ENCODE measurements at regions of chr22 and their contacts with region 1.

Region 1: DNA sequence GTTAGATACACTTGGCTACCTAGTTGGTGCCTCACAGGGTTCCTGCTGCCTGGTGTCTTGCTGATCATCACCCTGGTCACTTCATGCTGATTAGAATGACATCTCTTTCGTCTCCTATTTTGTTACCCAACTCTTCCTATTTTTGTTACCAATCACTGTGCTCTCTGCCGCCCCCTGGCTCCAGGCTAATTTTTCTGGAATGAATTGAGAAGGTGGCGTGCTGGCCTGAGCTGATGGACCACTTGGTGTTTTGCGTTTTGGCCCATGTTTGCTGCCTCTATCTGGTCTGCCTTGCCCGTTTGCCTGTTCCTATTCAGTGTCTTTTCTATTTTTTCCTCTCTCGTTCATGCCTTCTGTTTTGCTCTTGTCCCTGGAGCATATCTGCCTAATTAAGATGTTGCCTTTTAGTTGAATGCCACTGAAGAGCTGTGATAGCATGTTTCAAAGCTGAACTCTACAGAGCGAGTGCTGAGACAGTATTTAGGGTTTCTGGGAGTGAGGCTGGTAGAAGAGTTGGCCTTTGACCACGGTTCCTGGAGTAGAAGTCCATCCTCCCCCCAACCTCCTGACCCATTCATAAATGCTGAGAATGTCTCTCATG is 5.9 kb upstream of the ATF4 start:
- DNase-seq: peak in 11 of 14 experiments; percentile 42 to 68 (median 51)
- ATAC-seq: peak; percentile 58
- H3K4me3 ChIP-seq: no peak overlapping the region
- H3K4me3 Mint-ChIP-seq: no peak overlapping the region
- H3K27ac ChIP-seq: no peak overlapping the region
- H3K27ac Mint-ChIP-seq: peak overlapping the region; percentile 4
- H3K4me1 ChIP-seq: peaks cover 8% of the 10 kb centered on the region
- H3K4me1 Mint-ChIP-seq: peaks cover 16% of the 10 kb centered on the region
- H3K27me3 ChIP-seq: no peaks in the 10 kb centered on the region
- H3K27me3 Mint-ChIP-seq: no peaks in the 10 kb centered on the region
- CTCF ChIP-seq: peak; percentile 69

Region 2: DNA sequence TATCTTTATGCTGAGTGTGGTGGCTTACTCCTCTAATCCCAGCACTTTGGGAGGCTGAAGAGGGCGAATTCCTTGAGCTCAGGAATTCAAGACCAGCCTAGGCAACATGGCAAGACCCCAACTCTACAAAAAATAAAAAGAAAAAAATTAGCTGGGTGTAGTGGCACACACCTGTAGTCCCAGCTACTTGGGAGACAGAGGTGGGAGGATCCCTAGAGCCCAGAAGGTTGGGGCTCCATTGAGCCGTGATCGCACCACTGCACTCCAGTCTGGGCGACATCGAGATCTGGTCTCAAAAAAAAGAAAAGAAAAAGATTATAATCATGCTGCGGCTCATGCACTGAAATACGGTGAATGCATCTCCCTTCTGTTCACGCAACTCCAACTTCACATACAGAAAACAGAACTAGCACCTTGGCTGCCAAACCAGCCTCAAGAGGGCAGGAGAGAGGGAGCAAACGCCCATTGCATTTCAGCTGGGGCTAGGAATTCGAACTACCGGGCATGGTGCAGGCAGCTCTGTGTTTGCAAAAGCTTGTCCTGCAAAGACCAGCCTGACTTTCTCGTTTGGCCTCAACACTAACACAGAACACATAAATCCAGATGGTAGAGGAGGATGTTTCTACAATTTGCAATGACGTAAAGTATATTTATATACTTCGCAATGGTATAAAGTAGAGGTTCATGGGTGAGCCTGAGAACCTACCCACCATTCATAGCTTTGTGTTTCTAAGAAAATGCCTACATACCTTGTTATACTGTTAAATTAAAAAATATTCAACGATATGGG is 171.0 kb before region 1 on chr22:
- CTCF ChIA-PET with region 1: interaction called, 5 read pairs
- POLR2A ChIA-PET with region 1: interaction called, 7 read pairs
- intact Hi-C with region 1: loop called in 1 of 2 experiments (anchors 1 kb)
- DNase-seq: peak; percentile 39 to 76 (median 51)
- ATAC-seq: peak; percentile 93
- H3K4me3 ChIP-seq: no peak overlapping the region
- H3K4me3 Mint-ChIP-seq: no peak overlapping the region
- H3K27ac ChIP-seq: no peak overlapping the region
- H3K27ac Mint-ChIP-seq: no peak overlapping the region
- H3K4me1 ChIP-seq: peaks cover 6% of the 10 kb centered on the region
- H3K4me1 Mint-ChIP-seq: peaks cover 6% of the 10 kb centered on the region
- H3K27me3 ChIP-seq: peaks cover 0 to 4% of the 10 kb centered on the region in 2 experiments
- H3K27me3 Mint-ChIP-seq: peaks cover 8% of the 10 kb centered on the region
- CTCF ChIP-seq: peak; percentile 71

Region 3: DNA sequence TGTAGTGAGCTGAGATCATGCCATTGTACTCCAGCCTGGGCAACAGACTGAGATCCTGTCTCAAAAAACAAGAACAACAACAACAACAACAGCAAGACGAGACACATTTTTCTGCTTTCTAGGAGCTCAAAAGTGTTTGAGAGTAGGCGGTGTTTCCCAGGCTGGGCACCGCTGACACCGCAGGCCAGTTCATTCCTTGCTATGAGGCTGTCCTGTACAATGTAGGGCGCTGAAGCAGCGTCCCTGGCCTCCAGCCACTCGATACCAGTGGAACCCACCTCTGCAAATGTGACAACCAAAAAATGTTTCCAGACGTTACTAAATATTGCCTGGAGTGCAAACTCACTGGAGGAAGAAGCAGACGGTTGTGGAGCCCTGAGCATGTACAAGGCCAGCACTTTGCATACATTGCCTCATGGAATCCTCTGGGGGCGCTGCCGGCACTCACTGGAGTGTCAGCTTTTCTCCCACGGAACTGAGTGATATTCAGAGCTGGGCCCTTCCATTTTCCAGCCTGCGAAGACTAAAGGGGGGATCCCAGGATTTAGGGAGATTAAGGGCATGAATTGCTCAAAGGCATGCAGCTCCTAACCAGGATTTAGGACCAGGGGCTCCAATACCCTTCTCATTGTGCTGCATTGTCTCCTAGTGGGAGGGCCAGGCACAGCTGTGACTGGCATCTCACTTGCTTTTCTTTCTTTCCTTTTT is 18.2 kb before region 1 on chr22:
- CTCF ChIA-PET with region 1: interaction called, 13 read pairs
- POLR2A ChIA-PET with region 1: interaction called, 69 read pairs
- intact Hi-C with region 1: no loop called
- DNase-seq: peak in 12 of 14 experiments; percentile 29 to 75 (median 48)
- ATAC-seq: peak; percentile 77
- H3K4me3 ChIP-seq: no peak overlapping the region
- H3K4me3 Mint-ChIP-seq: no peak overlapping the region
- H3K27ac ChIP-seq: no peak overlapping the region
- H3K27ac Mint-ChIP-seq: no peak overlapping the region
- H3K4me1 ChIP-seq: peaks cover 14% of the 10 kb centered on the region
- H3K4me1 Mint-ChIP-seq: peaks cover 11% of the 10 kb centered on the region
- H3K27me3 ChIP-seq: no peaks in the 10 kb centered on the region
- H3K27me3 Mint-ChIP-seq: no peaks in the 10 kb centered on the region
- CTCF ChIP-seq: peak; percentile 72